T-cell (primary cell): ENCODE measurements at regions of chr1 and their contacts with region 1.

Region 1: DNA sequence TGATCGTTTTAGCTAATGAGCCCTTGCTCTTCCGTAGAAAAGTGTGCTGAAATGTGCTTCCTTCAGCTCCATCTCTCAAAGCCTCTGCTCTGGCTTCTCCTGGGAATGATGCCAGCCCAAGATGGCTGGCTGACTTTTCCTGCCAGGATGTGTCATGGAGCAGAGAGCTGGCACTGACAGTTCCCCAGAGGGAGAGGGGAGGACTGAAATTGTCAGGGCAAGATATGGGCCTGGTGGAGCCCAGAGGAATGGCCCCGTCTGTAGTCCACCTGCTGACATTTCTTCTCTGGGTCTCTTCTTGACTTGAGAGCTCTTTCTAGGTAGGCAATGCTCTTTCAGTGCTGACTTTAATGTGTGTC is 25.2 kb upstream of the PLEKHA6 start:
- DNase-seq: no peak
- ATAC-seq: no peak
- H3K4me3 ChIP-seq: no peak overlapping the region
- H3K4me3 Mint-ChIP-seq: no peak overlapping the region
- H3K27ac ChIP-seq: no peak overlapping the region
- H3K27ac Mint-ChIP-seq: no peak overlapping the region
- H3K4me1 ChIP-seq: peaks cover 4 to 7% of the 10 kb centered on the region in 2 experiments
- H3K4me1 Mint-ChIP-seq: peaks cover 0 to 6% (median 6%) of the 10 kb centered on the region in 3 donors
- H3K27me3 ChIP-seq: no peaks in the 10 kb centered on the region
- H3K27me3 Mint-ChIP-seq: peaks cover 0 to under 1% of the 10 kb centered on the region in 2 donors

Region 2: DNA sequence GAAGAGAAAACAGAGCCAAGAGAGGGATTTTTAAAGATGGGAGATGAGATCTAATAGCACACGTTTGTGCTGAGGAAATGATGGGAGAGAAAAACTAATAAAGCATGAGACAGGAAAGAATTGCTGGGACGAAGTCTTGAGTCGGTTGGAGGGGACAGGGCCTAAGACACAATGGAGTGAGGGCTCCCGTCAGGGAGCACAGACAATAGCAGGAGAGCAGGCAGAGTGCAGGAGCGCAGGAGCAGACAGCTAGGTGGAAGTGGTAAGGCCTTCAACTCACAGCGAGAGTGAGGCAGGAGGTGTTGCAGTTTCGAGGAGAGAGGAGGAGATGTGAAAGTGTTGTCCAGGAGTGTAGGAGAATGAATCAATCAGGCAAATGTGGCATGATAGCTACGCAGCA is 371.9 kb before region 1 on chr1:
- CTCF ChIA-PET with region 1: no interaction called
- POLR2A ChIA-PET with region 1: interaction called in 1 of 2 experiments, 10 read pairs
- DNase-seq: no peak
- ATAC-seq: no peak
- H3K4me3 ChIP-seq: no peak overlapping the region
- H3K4me3 Mint-ChIP-seq: no peak overlapping the region
- H3K27ac ChIP-seq: no peak overlapping the region
- H3K27ac Mint-ChIP-seq: no peak overlapping the region
- H3K4me1 ChIP-seq: no peaks in the 10 kb centered on the region
- H3K4me1 Mint-ChIP-seq: no peaks in the 10 kb centered on the region
- H3K27me3 ChIP-seq: peaks cover 0 to 22% of the 10 kb centered on the region in 2 experiments
- H3K27me3 Mint-ChIP-seq: peaks cover 0 to 8% of the 10 kb centered on the region in 2 donors

Region 3: GRCh38 chr1:204356997-204357396 is 28.0 kb before region 1 on chr1:
- CTCF ChIA-PET with region 1: no interaction called
- POLR2A ChIA-PET with region 1: no interaction called
- DNase-seq: no peak
- ATAC-seq: no peak
- H3K4me3 ChIP-seq: no peak overlapping the region
- H3K4me3 Mint-ChIP-seq: no peak overlapping the region
- H3K27ac ChIP-seq: no peak overlapping the region
- H3K27ac Mint-ChIP-seq: no peak overlapping the region
- H3K4me1 ChIP-seq: no peaks in the 10 kb centered on the region
- H3K4me1 Mint-ChIP-seq: peaks cover 0 to 2% (median 0%) of the 10 kb centered on the region in 3 donors
- H3K27me3 ChIP-seq: peaks cover 0 to 36% of the 10 kb centered on the region in 2 experiments
- H3K27me3 Mint-ChIP-seq: peaks cover 6 to 10% of the 10 kb centered on the region in 2 donors

Region 4: DNA sequence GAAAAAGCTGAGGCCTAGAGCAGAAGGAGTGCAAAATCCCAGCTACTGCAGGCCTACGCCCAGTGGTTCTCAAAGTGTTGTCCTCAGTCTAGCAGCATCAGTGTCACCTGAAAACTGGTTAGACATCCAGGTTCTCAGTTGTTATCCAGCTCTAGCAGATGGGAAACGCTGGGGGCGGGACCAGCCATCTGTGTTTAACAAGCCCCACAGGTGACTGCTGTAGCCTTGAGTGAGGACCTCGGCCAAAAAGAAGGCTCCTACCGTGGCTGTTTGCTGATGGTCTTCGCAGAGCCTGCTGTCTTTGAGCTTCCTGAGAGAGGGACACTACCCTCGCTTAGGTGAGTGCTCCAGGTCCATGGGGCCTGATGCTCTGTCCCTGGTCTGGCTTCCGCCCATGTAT is 230.9 kb after region 1 on chr1:
- CTCF ChIA-PET with region 1: no interaction called
- POLR2A ChIA-PET with region 1: interaction called in 1 of 2 experiments, 12 read pairs
- DNase-seq: no peak
- ATAC-seq: no peak
- H3K4me3 ChIP-seq: no peak overlapping the region
- H3K4me3 Mint-ChIP-seq: no peak overlapping the region
- H3K27ac ChIP-seq: no peak overlapping the region
- H3K27ac Mint-ChIP-seq: no peak overlapping the region
- H3K4me1 ChIP-seq: no peaks in the 10 kb centered on the region
- H3K4me1 Mint-ChIP-seq: no peaks in the 10 kb centered on the region
- H3K27me3 ChIP-seq: peaks cover 0 to 2% of the 10 kb centered on the region in 2 experiments
- H3K27me3 Mint-ChIP-seq: no peaks in the 10 kb centered on the region